Activated naive CD8-positive, alpha-beta T cell treated with anti-CD3 and anti-CD28 coated beads, Interleukin-2, amount 10 ng/mL, durations not matched to agents 7 days and 5 days (primary cell): ENCODE measurements at regions of chr2 and their contacts with region 1.

Region 1: GRCh38 chr2:160429248-160430000 is 64.2 kb downstream of the RBMS1 start:
- DNase-seq: no peak
- ATAC-seq: peak; percentile 59
- H3K4me3 Mint-ChIP-seq: peak overlapping the region; percentile 66
- H3K27ac Mint-ChIP-seq: peak overlapping the region; percentile 85
- H3K4me1 Mint-ChIP-seq: peaks cover 56% of the 10 kb centered on the region
- H3K27me3 Mint-ChIP-seq: peaks cover 2% of the 10 kb centered on the region

Region 2: GRCh38 chr2:160224060-160224459 is 205.4 kb before region 1 on chr2:
- POLR2A ChIA-PET with region 1: no interaction called
- DNase-seq: no peak
- ATAC-seq: peak; percentile 63
- H3K4me3 Mint-ChIP-seq: peak overlapping the region; percentile 9
- H3K27ac Mint-ChIP-seq: no peak overlapping the region
- H3K4me1 Mint-ChIP-seq: peaks cover 20% of the 10 kb centered on the region
- H3K27me3 Mint-ChIP-seq: peaks cover 15% of the 10 kb centered on the region

Region 3: GRCh38 chr2:160332318-160332717 is 97.1 kb before region 1 on chr2:
- POLR2A ChIA-PET with region 1: no interaction called
- DNase-seq: no peak
- ATAC-seq: peak; percentile 55
- H3K4me3 Mint-ChIP-seq: peak overlapping the region; percentile 60
- H3K27ac Mint-ChIP-seq: peak overlapping the region; percentile 35
- H3K4me1 Mint-ChIP-seq: peaks cover 72% of the 10 kb centered on the region
- H3K27me3 Mint-ChIP-seq: no peaks in the 10 kb centered on the region

Region 4: GRCh38 chr2:160440888-160441287 is 11.5 kb after region 1 on chr2:
- POLR2A ChIA-PET with region 1: no interaction called
- DNase-seq: no peak
- ATAC-seq: no peak
- H3K4me3 Mint-ChIP-seq: no peak overlapping the region
- H3K27ac Mint-ChIP-seq: no peak overlapping the region
- H3K4me1 Mint-ChIP-seq: peaks cover 2% of the 10 kb centered on the region
- H3K27me3 Mint-ChIP-seq: no peaks in the 10 kb centered on the region

Region 5: GRCh38 chr2:160493227-160494028 is 64.0 kb after region 1 on chr2 and contains the start of gene RBMS1:
- POLR2A ChIA-PET with region 1: interaction called, 10 read pairs
- DNase-seq: peak; percentile 73
- ATAC-seq: peak; percentile 41
- H3K4me3 Mint-ChIP-seq: peak within 1 kb of the TSS; percentile 93
- H3K27ac Mint-ChIP-seq: peak within 1 kb of the TSS; percentile 96
- H3K4me1 Mint-ChIP-seq: peaks cover 27% of the 10 kb centered on the region
- H3K27me3 Mint-ChIP-seq: peaks cover 9% of the 10 kb centered on the region
- total RNA-seq, gene RBMS1: 87.9 to 90.6 TPM